ENCODE measurements at regions of chr15 and their contacts with region 1.

Region 1: DNA sequence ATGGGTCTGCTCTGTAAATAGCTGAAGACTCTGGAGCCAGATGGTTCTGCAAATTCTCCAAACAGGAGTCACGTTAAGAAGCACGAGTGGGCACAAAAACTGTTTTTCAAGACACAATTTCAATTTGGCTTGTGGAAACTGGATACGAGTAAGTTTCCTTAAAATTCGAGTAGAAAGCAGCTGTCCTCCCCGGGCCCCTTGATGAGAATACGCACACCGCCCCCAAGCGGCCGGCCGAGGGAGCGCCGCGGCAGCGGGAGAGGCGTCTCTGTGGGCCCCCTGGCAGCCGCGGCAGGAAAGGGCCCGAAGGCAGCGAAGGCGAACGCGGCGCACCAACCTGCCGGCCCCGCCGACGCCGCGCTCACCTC is 778 bp upstream of the THBS1 start:
- DNase-seq: peak; percentile 67 to 96 (median 84)

Region 2: GRCh38 chr15:38699633-38700230 is 880.4 kb before region 1 on chr15:
- intact Hi-C with region 1: loop called (anchors 10 kb)
- DNase-seq: peak in 7 of 10 donors; percentile 37 to 89 (median 51)

Region 3: DNA sequence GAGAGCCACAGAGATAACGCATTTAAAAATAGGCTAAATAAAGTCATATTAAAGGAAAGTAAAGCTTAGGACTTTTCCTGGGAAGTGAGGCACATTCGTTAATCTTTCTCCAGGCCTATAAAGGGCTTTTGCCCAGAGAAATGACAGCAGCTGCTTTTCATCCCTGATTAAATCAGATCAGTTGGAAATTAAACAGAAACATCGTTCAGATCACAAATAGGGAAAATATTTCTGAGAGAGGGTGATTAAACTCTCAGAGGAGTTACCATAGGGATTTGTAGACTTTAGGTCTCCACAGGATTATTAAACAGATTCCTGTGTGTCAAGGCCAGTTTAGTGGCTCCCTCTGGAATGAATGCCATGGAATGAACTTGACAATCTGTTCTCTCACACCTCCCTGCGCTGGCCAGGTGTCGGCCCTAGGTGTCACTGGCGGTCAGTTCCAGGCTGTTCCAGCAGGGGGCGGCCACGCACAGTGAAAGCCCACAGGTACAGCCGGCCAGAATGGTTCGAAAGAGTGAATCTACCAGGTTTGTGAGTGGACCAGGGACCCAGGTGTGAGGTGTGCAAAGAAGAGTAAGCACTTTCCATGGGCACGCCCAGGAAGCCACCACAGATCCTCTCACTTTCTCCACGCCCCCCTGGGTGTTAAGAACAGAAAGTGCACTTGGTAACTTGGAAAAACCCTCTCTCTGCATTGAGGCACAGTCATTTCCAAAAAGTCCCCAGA is 762.5 kb before region 1 on chr15:
- intact Hi-C with region 1: loop called (anchors 5 kb)
- DNase-seq: peak; percentile 50 to 96 (median 80)

Region 4: GRCh38 chr15:39171944-39172368 is 408.1 kb before region 1 on chr15:
- intact Hi-C with region 1: loop called (anchors 1 kb)
- DNase-seq: peak in 7 of 10 donors; percentile 11 to 75 (median 26)

Region 5: DNA sequence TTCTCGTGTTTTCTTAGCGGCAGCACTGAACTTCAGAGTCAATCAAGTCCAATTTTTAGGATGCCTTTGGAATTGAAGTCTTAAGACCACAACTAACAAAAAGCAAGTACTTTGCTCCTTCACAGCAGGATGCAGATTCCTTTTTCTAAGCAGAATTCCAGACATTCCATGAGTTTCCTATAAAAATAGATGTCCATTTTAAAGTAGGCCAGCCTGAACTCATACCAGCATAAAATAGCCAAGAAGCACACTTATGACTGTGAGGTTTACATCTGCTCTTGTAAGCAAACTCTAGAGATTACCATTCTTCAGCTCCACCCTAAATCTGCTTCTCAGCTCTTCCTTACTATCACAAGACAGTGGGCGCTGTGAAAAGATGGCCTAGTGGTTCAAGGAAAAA is 86.6 kb after region 1 on chr15:
- intact Hi-C with region 1: no loop called
- DNase-seq: no peak